Heart left ventricle (tissue), 16 donors: ENCODE measurements at regions of chr19 and their contacts with region 1.

Region 1: DNA sequence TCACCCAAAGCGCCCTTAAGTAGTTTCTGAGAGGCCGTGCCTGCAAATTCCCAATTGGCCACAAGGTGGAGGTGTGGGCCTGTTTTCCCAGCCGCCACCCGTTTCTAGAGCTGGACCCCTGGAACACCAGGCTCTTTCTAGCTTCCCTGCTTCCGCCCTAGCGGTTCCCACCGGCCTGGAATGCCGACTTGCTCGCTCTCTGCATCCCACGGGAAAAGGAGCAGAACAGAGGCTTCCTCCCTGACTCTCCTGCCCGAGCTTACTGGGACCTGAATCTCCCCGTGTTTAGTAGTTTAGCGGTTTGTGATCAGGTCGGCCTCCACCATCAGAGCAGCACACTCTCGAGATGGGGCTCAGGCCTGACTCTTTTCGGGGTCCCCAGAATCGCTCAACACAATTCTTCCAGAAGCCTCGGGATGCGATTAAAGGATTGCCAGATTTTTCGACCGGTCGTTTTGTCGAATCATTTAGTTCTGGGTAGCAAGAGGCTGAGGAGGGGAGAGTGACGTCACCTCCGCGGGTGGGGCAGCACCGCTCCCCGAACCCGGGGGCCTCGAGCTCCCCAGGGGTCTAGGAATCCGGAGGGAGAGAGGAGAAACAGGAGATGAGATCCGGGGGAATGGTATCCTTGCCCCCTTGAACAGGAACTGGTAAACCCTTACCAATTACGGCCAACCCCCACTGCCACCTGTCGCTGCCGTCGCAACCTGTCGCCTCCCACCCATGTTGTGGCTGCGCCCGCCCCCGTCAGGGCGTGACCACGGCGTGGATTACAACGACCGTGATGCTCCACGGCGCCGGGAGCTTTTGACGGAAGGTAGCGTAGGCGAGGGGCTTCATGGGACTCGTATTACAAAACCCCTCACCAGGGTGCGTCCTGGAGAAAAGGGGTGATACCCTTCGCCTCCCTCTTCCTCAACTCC is 8.0 kb downstream of the NAPSA start:
- DNase-seq: peak; percentile 65 to 89 (median 76)
- ATAC-seq: peak; percentile 68 to 86 (median 75)
- H3K4me3 ChIP-seq: peak overlapping the region; percentile 14 to 71 (median 54)
- H3K27ac ChIP-seq: peak overlapping the region; percentile 37 to 92 (median 82)
- H3K4me1 ChIP-seq: peaks cover 0 to 13% (median 0%) of the 10 kb centered on the region in 12 donors
- H3K27me3 ChIP-seq: no peaks in the 10 kb centered on the region
- CTCF ChIP-seq: peak; percentile 82 to 94 (median 88)
- POLR2A ChIP-seq: no peak

Region 2: GRCh38 chr19:50414864-50415660 is 57.6 kb after region 1 on chr19:
- intact Hi-C with region 1: loop called in 3 of 10 experiments (anchors 2 to 5 kb)
- DNase-seq: peak; percentile 64 to 90 (median 76)
- ATAC-seq: peak; percentile 71 to 87 (median 78)
- H3K4me3 ChIP-seq: no peak overlapping the region
- H3K27ac ChIP-seq: no peak overlapping the region
- H3K4me1 ChIP-seq: peaks cover 0 to 13% (median 0%) of the 10 kb centered on the region in 12 donors
- H3K27me3 ChIP-seq: peaks cover 12 to 32% (median 24%) of the 10 kb centered on the region in 9 donors
- CTCF ChIP-seq: peak; percentile 74 to 92 (median 88)
- POLR2A ChIP-seq: no peak

Region 3: GRCh38 chr19:50511068-50511822 is 153.8 kb after region 1 on chr19 and contains the start of gene JOSD2:
- intact Hi-C with region 1: loop called in 1 of 10 experiments (anchors 1 kb)
- DNase-seq: peak; percentile 98 to 100 (median 99)
- ATAC-seq: peak; percentile 94 to 97 (median 95)
- H3K4me3 ChIP-seq: peak within 1 kb of the TSS; percentile 42 to 89 (median 74)
- H3K27ac ChIP-seq: peak within 1 kb of the TSS; percentile 50 to 86 (median 78)
- H3K4me1 ChIP-seq: peaks cover 0 to 20% (median 8%) of the 10 kb centered on the region in 12 donors
- H3K27me3 ChIP-seq: peaks cover 0 to 8% (median 0%) of the 10 kb centered on the region in 9 donors
- CTCF ChIP-seq: peak in 1 of 12 donors; percentile 17
- POLR2A ChIP-seq: peak in 1 of 2 donors; percentile 77
- total RNA-seq, gene JOSD2: 18.7 to 43.8 (median 29.5) TPM

Region 4: DNA sequence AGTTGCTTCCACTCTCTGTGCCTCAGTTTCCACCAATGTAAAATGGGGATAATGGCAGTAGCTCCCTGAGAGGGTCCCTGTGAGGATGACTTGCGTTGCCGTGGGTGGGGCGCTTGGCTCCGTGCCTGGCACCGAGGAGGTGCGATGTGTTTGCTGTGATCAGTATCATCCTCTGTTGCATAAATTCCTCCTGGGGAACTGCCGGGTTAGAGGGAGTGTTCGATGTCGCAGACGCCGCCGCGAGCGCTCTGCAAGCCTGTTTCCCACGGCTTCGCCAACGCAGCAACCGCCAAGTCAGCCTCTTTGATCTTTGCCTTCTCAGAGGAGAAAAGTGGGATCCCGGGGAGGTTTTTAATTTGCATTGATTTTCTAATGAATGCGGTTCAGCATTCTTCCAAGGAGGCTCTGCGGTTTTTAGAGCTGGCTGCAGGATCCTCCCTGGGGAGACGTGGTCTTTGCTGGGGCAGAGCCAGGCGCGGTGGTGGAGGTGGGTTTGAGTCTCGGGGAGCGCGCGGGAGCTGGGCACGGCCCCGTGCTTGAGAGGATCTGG is 420.4 kb after region 1 on chr19:
- intact Hi-C with region 1: loop called in 4 of 10 experiments (anchors 2 to 5 kb)
- DNase-seq: no peak
- ATAC-seq: no peak
- H3K4me3 ChIP-seq: no peak overlapping the region
- H3K27ac ChIP-seq: no peak overlapping the region
- H3K4me1 ChIP-seq: peaks cover 0 to 3% (median 0%) of the 10 kb centered on the region in 12 donors
- H3K27me3 ChIP-seq: peaks cover 28 to 96% (median 60%) of the 10 kb centered on the region in 9 donors
- CTCF ChIP-seq: no peak
- POLR2A ChIP-seq: no peak

Region 5: GRCh38 chr19:50922317-50922853 is 564.9 kb after region 1 on chr19:
- intact Hi-C with region 1: loop called in 5 of 10 experiments (anchors 5 to 10 kb)
- DNase-seq: peak; percentile 61 to 77 (median 68)
- ATAC-seq: peak; percentile 81 to 96 (median 90)
- H3K4me3 ChIP-seq: no peak overlapping the region
- H3K27ac ChIP-seq: no peak overlapping the region
- H3K4me1 ChIP-seq: peaks cover 0 to 4% (median 0%) of the 10 kb centered on the region in 12 donors
- H3K27me3 ChIP-seq: peaks cover 0 to 59% (median 21%) of the 10 kb centered on the region in 9 donors
- CTCF ChIP-seq: peak; percentile 65 to 89 (median 81)
- POLR2A ChIP-seq: no peak